Posterior cingulate gyrus (tissue), 11 donors: ENCODE measurements at regions of chr5 and their contacts with region 1.

Region 1: DNA sequence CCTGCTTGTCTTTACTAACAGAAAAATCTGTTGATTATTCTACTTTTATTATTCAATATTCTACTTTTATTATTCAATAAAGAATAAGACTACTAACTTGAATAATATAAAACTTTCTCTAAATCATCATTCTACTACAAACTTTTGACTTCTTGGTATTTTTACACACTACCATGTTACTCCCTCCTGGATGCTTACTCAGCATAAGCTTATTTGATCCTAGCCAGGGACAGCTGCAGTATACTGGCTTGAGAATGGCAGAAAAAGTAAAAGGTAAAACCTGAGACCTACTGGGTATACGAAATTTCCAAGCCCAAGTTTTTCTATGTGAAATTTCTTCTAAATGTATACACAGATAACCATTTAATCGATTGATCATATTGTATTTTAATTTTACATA is 26.1 kb downstream of the PGGT1B start:
- DNase-seq: no peak

Region 2: DNA sequence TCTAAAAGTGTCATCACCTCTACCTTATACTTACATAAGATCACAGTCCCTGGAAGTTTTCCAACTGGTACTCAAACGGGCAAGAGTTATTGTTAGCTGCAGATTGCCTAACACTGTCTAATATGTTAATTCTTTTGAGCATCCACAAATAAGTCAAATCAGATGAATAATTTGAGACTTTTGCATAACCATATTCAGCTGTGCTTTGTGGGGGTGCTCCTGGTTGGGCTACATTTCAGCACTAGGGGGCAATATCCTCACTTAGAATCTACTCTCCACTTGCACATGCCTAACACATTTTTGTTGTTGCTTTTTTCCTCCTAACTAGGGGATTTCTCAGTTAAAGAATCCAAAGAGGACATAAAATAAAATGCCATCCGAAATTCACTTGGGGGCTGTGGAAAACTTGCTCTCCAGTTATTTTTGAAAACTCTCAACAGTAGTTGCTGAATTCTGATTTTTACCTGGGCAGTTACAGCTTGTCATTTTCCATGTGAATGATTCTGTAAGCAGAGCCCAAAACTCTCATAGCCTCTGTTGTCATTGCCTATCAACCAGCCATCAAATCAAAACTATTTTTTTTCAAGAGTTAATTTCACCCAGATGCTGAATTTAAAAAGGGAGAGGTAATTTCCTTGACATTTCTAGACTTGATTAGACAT is 138.4 kb before region 1 on chr5:
- intact Hi-C with region 1: loop called (anchors 5 kb)
- DNase-seq: peak in 2 of 10 donors; percentile 9 to 21

Region 3: DNA sequence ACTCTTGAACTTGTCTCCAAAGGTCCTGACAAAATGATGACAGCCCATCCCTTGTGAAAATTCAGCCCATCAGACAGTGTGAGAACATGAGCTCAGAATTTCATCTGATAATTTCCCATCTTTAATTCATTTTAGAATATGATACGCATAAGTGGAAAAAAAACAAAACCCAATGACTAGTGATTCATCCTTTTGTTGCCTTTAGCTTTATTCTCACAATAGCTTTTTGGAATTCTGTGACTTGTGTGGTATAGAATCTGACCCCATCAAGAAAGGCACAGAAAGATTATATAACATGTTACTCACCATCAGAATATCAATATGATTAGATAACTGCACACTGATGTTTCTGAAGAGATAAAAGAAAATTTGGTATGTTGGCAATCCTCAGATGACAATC is 405.3 kb after region 1 on chr5:
- intact Hi-C with region 1: no loop called
- DNase-seq: no peak